ENCODE measurements at regions of chr18 and their contacts with region 1.

Region 1: GRCh38 chr18:25408294-25408693 is 56.3 kb upstream of the ZNF521 start:
- DNase-seq: no peak
- H3K4me3 ChIP-seq: no peak overlapping the region
- H3K4me3 Mint-ChIP-seq: no peak overlapping the region
- H3K27ac Mint-ChIP-seq: no peak overlapping the region
- H3K4me1 ChIP-seq: no peaks in the 10 kb centered on the region
- H3K4me1 Mint-ChIP-seq: no peaks in the 10 kb centered on the region
- H3K27me3 ChIP-seq: no peaks in the 10 kb centered on the region
- H3K27me3 Mint-ChIP-seq: peaks cover 7% of the 10 kb centered on the region
- CTCF ChIP-seq: no peak

Region 2: DNA sequence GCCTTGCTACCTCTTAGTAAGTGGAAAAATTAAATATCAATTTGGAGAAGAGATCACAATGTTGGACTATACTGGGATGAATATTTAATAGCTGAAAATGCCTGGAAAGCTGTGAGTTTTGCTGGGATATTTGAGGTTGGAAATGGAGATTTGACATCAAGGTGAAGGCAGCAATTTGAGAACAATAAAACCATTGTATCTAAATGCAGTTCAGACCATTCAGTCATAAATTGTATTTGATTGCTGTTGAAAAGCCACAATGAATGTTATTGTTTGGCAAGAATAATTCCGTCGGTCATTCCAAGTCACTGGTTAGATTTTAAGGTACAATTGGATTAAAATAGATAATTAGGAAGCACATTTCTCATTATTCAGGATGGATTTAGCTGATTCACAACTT is 622.3 kb before region 1 on chr18:
- CTCF ChIA-PET with region 1: no interaction called
- POLR2A ChIA-PET with region 1: no interaction called
- intact Hi-C with region 1: loop called (anchors 10 kb)
- DNase-seq: no peak
- H3K4me3 ChIP-seq: no peak overlapping the region
- H3K4me3 Mint-ChIP-seq: no peak overlapping the region
- H3K27ac Mint-ChIP-seq: no peak overlapping the region
- H3K4me1 ChIP-seq: no peaks in the 10 kb centered on the region
- H3K4me1 Mint-ChIP-seq: no peaks in the 10 kb centered on the region
- H3K27me3 ChIP-seq: no peaks in the 10 kb centered on the region
- H3K27me3 Mint-ChIP-seq: no peaks in the 10 kb centered on the region
- CTCF ChIP-seq: no peak

Region 3: GRCh38 chr18:25446972-25447371 is 38.7 kb after region 1 on chr18:
- CTCF ChIA-PET with region 1: no interaction called
- POLR2A ChIA-PET with region 1: no interaction called
- intact Hi-C with region 1: no loop called
- DNase-seq: no peak
- H3K4me3 ChIP-seq: no peak overlapping the region
- H3K4me3 Mint-ChIP-seq: no peak overlapping the region
- H3K27ac Mint-ChIP-seq: no peak overlapping the region
- H3K4me1 ChIP-seq: no peaks in the 10 kb centered on the region
- H3K4me1 Mint-ChIP-seq: no peaks in the 10 kb centered on the region
- H3K27me3 ChIP-seq: no peaks in the 10 kb centered on the region
- H3K27me3 Mint-ChIP-seq: peaks cover 5% of the 10 kb centered on the region
- CTCF ChIP-seq: no peak